ENCODE measurements at regions of chr6 and their contacts with region 1.

Region 1: DNA sequence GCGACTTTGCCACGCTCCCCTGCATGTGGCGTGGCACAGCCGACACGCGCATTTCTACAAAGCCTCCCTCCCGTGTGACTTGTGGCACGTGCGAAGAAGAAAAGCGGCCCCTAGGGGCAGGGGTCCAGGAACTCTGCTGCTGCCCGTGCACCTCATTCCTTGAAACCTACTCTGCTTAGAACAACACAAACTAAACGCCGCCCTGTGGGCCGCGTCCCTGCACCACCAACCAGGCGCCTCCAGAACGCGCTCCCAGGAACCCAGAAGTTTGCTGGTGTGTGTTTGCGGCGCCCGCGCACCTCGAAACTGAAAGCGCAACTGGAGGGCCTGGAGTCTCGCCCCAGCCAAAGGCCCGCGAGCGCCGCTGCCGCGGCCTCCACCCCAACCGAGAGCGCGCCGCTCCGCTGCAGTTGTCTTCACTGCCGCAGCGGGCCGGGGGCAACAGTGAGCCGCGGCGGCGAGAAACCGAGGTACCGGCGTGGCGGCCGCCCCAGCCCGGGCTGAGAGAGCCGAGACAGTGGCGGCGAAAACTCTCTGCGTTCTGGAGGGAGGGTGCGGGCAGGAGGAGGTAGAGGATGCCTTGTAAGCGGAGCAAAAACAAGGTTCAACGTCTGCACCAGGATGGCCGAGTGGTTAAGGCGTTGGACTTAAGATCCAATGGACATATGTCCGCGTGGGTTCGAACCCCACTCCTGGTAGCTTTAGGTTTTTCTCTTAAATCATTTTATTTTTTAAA is 65.8 kb downstream of the STX11 start:
- DNase-seq: peak; percentile 93
- H3K4me3 ChIP-seq: peak overlapping the region; percentile 68
- H3K27ac ChIP-seq: peak overlapping the region; percentile 78
- H3K4me1 ChIP-seq: peaks cover 17% of the 10 kb centered on the region
- CTCF ChIP-seq: peak; percentile 76

Region 2: GRCh38 chr6:143842902-143843676 is 373.0 kb before region 1 on chr6 and contains the start of gene LTV1:
- CTCF ChIA-PET with region 1: no interaction called
- POLR2A ChIA-PET with region 1: interaction called, 3 read pairs
- intact Hi-C with region 1: loop called (anchors 10 kb)
- DNase-seq: peak; percentile 96
- H3K4me3 ChIP-seq: peak within 1 kb of the TSS; percentile 98
- H3K27ac ChIP-seq: peak within 1 kb of the TSS; percentile 58
- H3K4me1 ChIP-seq: peaks cover 13% of the 10 kb centered on the region
- CTCF ChIP-seq: no peak
- total RNA-seq, gene LTV1: 25.6 and 26.8 TPM in 2 replicates

Region 3: DNA sequence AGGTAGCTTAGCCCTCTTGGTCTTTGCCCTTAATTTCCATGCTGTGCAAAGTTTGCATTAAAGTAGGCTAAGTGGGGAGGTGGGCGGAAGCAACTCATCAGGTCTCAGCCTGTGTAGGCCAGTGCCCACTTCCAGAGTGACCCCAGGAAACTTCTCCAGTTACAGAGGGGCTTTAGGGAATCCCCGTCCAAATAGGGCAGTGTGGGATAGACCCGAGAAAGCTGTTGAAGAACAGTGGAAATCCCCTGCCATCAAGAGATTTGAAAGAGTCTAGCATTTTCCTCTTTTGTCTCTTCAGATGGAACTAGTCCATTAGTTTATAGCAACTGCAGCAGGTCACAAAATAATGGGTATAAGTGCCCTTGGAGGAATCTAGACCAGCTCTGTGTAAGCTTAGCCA is 140.9 kb before region 1 on chr6:
- CTCF ChIA-PET with region 1: no interaction called
- POLR2A ChIA-PET with region 1: no interaction called
- intact Hi-C with region 1: no loop called
- DNase-seq: no peak
- H3K4me3 ChIP-seq: no peak overlapping the region
- H3K27ac ChIP-seq: no peak overlapping the region
- H3K4me1 ChIP-seq: no peaks in the 10 kb centered on the region
- CTCF ChIP-seq: no peak

Region 4: DNA sequence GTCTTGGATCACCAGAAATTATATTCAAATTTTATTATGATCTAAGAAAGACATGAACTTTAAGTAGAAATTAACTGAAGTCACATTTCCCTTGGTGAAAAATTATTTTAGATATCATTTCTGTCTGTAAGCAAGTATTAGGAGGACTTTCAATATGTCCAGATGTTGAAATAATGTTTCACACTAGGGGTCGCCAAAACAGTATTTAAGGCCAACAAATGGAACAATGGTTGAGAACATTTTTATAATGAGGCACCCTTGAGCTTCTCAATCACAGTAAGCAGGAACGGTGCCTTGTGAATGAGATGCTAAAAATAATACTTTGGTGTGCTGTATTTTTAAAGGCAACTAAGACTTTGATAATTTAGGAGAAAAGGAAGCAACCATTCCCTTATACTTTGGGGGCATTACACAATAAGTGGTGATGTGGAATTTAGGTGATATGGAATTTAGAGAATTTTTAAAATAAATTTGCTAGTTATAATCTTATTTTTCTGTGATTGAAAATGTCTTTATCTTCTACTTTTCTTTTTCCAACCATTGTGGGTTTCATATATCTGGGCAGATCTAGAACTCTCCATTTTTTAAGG is 111.1 kb before region 1 on chr6:
- CTCF ChIA-PET with region 1: no interaction called
- POLR2A ChIA-PET with region 1: no interaction called
- intact Hi-C with region 1: loop called (anchors 2 kb)
- DNase-seq: peak; percentile 70
- H3K4me3 ChIP-seq: no peak overlapping the region
- H3K27ac ChIP-seq: no peak overlapping the region
- H3K4me1 ChIP-seq: no peaks in the 10 kb centered on the region
- CTCF ChIP-seq: peak; percentile 91

Region 5: DNA sequence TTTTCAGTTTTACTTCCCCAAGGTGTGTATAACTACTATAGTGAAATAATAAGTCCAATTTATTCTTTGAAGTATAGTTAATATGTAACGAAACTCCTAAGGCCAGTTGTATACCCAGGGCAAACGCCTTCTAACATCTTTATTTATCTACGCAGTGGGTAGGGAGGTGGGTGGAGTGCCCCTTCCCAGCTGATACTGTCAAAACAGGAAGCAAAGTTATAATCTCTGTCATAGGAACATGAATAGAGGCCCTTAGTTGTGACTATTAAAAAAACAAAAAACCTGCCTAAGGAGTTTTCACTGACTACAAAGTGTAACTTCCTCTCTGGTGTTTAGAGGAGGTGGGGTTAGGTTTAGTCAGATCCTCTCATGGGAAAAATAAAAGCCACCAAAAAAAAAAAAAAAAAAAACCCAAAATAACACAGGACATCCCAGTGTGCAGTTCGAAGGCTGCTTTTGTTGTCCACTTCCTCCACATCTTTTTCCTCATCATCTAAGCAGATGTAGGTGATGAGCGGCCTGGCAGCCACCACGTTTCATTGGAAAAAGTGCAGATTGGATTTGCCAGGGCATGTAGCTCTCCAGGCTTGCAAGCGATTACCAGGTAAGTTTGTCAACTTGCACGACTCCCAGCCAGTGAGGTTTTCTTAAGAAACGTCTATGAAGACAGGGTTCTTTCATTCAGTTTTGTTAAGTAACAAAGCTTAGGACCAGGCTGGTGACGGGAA is 127.8 kb after region 1 on chr6:
- CTCF ChIA-PET with region 1: no interaction called
- POLR2A ChIA-PET with region 1: interaction called, 5 read pairs
- intact Hi-C with region 1: loop called (anchors 5 kb)
- DNase-seq: peak; percentile 72
- H3K4me3 ChIP-seq: peak overlapping the region; percentile 63
- H3K27ac ChIP-seq: peak overlapping the region; percentile 57
- H3K4me1 ChIP-seq: peaks cover 42% of the 10 kb centered on the region
- CTCF ChIP-seq: no peak

Region 6: GRCh38 chr6:145734486-145735355 is 1518.6 kb after region 1 on chr6:
- CTCF ChIA-PET with region 1: no interaction called
- POLR2A ChIA-PET with region 1: no interaction called
- intact Hi-C with region 1: loop called (anchors 10 kb)
- DNase-seq: peak; percentile 78
- H3K4me3 ChIP-seq: peak overlapping the region; percentile 91
- H3K27ac ChIP-seq: peak overlapping the region; percentile 86
- H3K4me1 ChIP-seq: peaks cover 21% of the 10 kb centered on the region
- CTCF ChIP-seq: no peak